Calu3 (cell line): ENCODE measurements at regions of chr5 and their contacts with region 1.

Region 1: DNA sequence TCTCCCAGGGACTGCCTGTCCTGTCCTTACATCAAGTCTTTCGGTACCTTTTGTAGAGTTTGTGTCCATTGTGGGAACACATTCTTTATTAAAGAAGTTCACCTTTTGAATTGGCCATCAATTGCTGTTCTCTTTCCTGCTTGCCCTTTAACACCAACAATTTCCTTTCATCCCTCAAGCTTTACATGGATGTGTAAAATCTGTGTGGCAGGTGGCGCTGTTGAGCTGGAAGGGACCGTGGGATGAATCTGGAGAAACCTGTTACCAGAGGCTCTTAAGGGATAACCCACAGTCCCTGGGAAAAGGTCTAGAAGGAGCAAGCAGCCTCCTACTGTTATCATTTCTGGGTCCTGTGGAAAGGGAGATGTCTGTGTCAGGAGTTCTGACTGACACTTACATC is 7.9 kb upstream of the ZFP62 start:
- DNase-seq: peak; percentile 92
- H3K4me3 Mint-ChIP-seq: no peak overlapping the region
- H3K27ac Mint-ChIP-seq: no peak overlapping the region
- H3K4me1 Mint-ChIP-seq: peaks cover 38% of the 10 kb centered on the region
- H3K27me3 Mint-ChIP-seq: no peaks in the 10 kb centered on the region
- CTCF ChIP-seq: peak; percentile 83

Region 2: DNA sequence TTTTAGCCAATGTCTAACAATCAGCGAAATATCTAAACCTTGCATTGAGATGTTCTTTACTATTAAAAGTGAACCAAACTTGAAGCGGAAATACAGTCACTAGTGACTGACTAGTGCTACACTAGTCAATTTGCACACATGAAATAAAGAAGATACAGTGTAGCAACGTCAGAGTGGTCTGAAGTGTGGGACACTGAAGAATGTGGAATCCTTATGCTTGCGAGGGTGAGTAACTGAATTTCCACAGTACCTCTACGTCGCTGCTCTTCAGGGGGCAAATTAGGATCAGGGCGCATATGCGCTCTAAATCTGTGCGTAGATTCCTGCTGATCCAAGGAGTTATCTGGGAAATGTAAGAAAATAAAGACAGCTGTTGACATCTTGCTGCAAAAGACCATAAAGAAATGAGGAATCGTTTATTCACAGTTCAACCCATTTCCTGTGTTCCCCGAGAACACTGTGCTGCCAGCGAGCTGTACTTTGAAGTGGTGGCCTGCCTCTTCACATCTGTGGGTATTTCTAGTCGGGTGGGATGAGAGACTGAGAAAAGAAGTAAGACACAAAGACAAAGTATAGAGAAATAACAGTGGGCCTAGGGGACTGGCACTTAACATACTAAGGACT is 179.8 kb before region 1 on chr5:
- CTCF ChIA-PET with region 1: no interaction called
- intact Hi-C with region 1: no loop called
- DNase-seq: no peak
- H3K4me3 Mint-ChIP-seq: no peak overlapping the region
- H3K27ac Mint-ChIP-seq: no peak overlapping the region
- H3K4me1 Mint-ChIP-seq: peaks cover 10% of the 10 kb centered on the region
- H3K27me3 Mint-ChIP-seq: peaks cover 86% of the 10 kb centered on the region
- CTCF ChIP-seq: no peak

Region 3: GRCh38 chr5:180976518-180976917 is 107.6 kb after region 1 on chr5:
- CTCF ChIA-PET with region 1: interaction called, 5 read pairs
- intact Hi-C with region 1: loop called (anchors 2 kb)
- DNase-seq: peak; percentile 73
- H3K4me3 Mint-ChIP-seq: peak overlapping the region; percentile 46
- H3K27ac Mint-ChIP-seq: peak overlapping the region; percentile 65
- H3K4me1 Mint-ChIP-seq: peaks cover 28% of the 10 kb centered on the region
- H3K27me3 Mint-ChIP-seq: no peaks in the 10 kb centered on the region
- CTCF ChIP-seq: no peak

Region 4: GRCh38 chr5:181028032-181028819 is 159.3 kb after region 1 on chr5:
- CTCF ChIA-PET with region 1: no interaction called
- intact Hi-C with region 1: loop called (anchors 5 kb)
- DNase-seq: peak; percentile 51
- H3K4me3 Mint-ChIP-seq: peak overlapping the region; percentile 67
- H3K27ac Mint-ChIP-seq: peak overlapping the region; percentile 25
- H3K4me1 Mint-ChIP-seq: no peaks in the 10 kb centered on the region
- H3K27me3 Mint-ChIP-seq: no peaks in the 10 kb centered on the region
- CTCF ChIP-seq: no peak

Region 5: DNA sequence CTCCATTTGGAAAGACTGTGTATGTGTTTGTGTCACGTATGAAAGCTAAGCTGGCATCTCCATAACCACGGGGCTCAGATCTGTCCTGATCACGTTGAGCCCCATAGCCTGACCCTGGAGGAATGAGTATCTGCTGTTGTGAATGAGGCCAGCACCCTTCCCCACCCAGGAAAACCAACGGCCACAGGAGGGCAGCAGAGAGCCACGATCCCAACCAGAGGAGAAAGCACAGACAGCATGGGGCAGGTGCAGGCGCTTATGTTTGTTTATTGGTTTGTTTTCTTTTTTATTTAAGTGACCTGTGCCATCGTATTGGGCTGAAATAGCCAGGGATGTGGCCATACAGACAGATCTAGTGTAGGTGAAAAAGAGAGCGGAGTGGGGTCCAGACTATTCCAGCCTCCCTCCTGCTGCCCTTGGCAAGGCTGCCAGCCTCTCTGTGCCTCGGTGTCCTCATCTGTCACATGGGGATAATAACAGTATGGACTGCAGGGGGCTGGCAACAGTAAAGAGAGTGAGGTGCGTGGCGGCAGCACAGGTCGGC is 290.4 kb after region 1 on chr5:
- CTCF ChIA-PET with region 1: interaction called, 3 read pairs
- intact Hi-C with region 1: loop called (anchors 5 kb)
- DNase-seq: peak; percentile 95
- H3K4me3 Mint-ChIP-seq: no peak overlapping the region
- H3K27ac Mint-ChIP-seq: peak overlapping the region; percentile 46
- H3K4me1 Mint-ChIP-seq: peaks cover 14% of the 10 kb centered on the region
- H3K27me3 Mint-ChIP-seq: peaks cover 32% of the 10 kb centered on the region
- CTCF ChIP-seq: peak; percentile 62